ENCODE measurements at regions of chr18 and their contacts with region 1.

Region 1: GRCh38 chr18:35889677-35890076 is 82.8 kb upstream of the RMP24 start:
- DNase-seq: no peak
- ATAC-seq: no peak
- H3K4me3 ChIP-seq: no peak overlapping the region
- H3K4me3 Mint-ChIP-seq: no peak overlapping the region
- H3K27ac ChIP-seq: no peak overlapping the region
- H3K27ac Mint-ChIP-seq: no peak overlapping the region
- H3K4me1 ChIP-seq: no peaks in the 10 kb centered on the region
- H3K4me1 Mint-ChIP-seq: no peaks in the 10 kb centered on the region
- H3K27me3 ChIP-seq: peaks cover 0 to 3% of the 10 kb centered on the region in 2 experiments
- H3K27me3 Mint-ChIP-seq: peaks cover 45% of the 10 kb centered on the region
- CTCF ChIP-seq: no peak

Region 2: DNA sequence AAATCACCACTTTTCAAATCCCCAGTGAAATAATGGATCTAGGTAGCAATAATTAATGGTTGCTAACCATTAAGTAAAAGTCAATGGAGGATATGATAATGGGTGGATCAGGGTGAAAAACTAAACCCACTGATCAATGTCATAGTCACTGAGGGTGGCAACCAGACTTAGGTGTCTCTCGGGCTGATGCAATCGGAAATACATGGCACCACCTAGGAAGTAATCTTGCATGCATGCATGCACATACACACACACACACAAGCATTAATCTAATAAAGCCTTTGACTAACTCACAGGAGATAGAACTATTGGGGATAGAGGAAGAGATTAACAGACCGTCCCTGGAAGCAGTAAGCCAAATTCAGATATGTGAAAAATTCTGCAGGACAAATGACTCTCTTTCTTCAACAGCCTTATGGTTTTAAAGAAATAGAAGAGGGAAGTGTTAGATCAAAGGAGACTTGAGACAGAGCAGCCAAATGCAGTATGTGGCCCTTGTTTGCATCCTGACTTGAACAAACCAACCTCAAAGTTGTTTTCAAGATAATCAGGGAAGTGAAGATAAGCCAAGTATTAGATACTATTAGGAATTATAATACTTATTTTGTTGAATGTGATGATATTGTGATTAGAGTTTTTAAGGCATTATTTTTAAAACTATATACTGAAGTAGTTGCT is 103.2 kb before region 1 on chr18:
- CTCF ChIA-PET with region 1: interaction called, 3 read pairs
- POLR2A ChIA-PET with region 1: no interaction called
- intact Hi-C with region 1: loop called in 1 of 2 experiments (anchors 10 kb)
- DNase-seq: no peak
- ATAC-seq: no peak
- H3K4me3 ChIP-seq: no peak overlapping the region
- H3K4me3 Mint-ChIP-seq: no peak overlapping the region
- H3K27ac ChIP-seq: no peak overlapping the region
- H3K27ac Mint-ChIP-seq: no peak overlapping the region
- H3K4me1 ChIP-seq: no peaks in the 10 kb centered on the region
- H3K4me1 Mint-ChIP-seq: no peaks in the 10 kb centered on the region
- H3K27me3 ChIP-seq: peaks cover 0 to 4% of the 10 kb centered on the region in 2 experiments
- H3K27me3 Mint-ChIP-seq: peaks cover 33% of the 10 kb centered on the region
- CTCF ChIP-seq: no peak